ENCODE measurements at regions of chr9 and their contacts with region 1.

Region 1: DNA sequence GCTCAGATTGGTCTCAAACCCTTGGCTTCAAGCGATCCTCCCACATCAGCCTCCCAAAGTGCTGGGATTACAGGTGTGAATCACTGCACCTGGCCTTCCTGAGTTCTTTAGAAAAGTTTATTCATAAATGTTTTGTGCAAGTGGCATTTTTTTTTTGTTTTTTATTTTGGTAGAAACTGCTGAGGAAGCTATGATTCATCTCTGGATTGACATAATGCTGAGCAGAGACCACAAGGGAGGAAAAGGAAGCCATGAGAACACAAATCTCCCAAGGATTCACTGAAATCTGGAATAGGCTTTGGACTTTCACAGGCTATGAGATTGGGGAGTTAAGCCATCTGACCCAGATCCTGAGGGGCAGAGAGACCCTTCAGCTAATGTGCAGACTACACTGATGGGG is 3.4 kb upstream of the SLC46A2 start:
- DNase-seq: peak; percentile 54 to 83 (median 82)
- H3K4me3 ChIP-seq: peak overlapping the region; percentile 7 to 92 (median 12)
- H3K4me3 Mint-ChIP-seq: peak overlapping the region; percentile 7 to 87
- H3K27ac ChIP-seq: peak overlapping the region; percentile 96 to 97
- H3K27ac Mint-ChIP-seq: peak overlapping the region; percentile 97 to 100 (median 100)
- H3K4me1 ChIP-seq: peaks cover 93 to 100% of the 10 kb centered on the region in 2 donors
- H3K4me1 Mint-ChIP-seq: peaks cover 91% of the 10 kb centered on the region
- H3K27me3 ChIP-seq: no peaks in the 10 kb centered on the region
- H3K27me3 Mint-ChIP-seq: peaks cover 0 to 7% (median 6%) of the 10 kb centered on the region in 3 donors
- CTCF ChIP-seq: no peak

Region 2: DNA sequence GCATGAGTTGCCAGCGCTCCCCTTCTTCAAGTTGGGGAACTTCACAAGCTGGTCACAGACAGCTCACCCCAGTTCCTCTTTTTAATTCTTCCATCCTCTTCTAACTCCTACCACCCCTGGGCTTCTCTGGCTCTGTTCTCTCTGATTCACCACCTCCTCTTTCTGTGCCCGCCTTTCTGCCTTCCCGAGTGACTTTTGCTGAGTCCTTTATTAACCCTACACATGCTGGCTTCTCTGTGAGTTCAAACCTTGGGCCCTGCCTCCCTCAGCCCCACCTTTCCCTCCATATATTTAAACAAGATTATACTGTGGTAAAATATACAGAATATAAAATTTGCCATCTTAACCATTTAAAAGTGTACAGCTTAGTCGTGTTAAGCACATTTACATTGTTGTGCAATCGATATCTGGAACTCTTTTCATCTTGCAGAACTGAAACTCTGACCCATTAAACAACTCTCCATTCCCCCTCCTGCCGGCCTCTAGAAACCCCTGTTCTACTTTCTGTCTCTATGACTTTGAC is 35.4 kb before region 1 on chr9:
- intact Hi-C with region 1: loop called (anchors 1 to 5 kb)
- DNase-seq: peak; percentile 87 to 95 (median 93)
- H3K4me3 ChIP-seq: peak overlapping the region in 1 of 3 experiments; percentile 70
- H3K4me3 Mint-ChIP-seq: peak overlapping the region; percentile 4 to 43
- H3K27ac ChIP-seq: peak overlapping the region; percentile 82 to 97
- H3K27ac Mint-ChIP-seq: peak overlapping the region; percentile 94 to 100 (median 99)
- H3K4me1 ChIP-seq: peaks cover 91 to 93% of the 10 kb centered on the region in 2 donors
- H3K4me1 Mint-ChIP-seq: peaks cover 94% of the 10 kb centered on the region
- H3K27me3 ChIP-seq: no peaks in the 10 kb centered on the region
- H3K27me3 Mint-ChIP-seq: peaks cover 0 to 5% (median 0%) of the 10 kb centered on the region in 3 donors
- CTCF ChIP-seq: no peak

Region 3: GRCh38 chr9:112881366-112881765 is 12.7 kb before region 1 on chr9:
- intact Hi-C with region 1: no loop called
- DNase-seq: no peak
- H3K4me3 ChIP-seq: no peak overlapping the region
- H3K4me3 Mint-ChIP-seq: no peak overlapping the region
- H3K27ac ChIP-seq: no peak overlapping the region
- H3K27ac Mint-ChIP-seq: peak overlapping the region in 4 of 7 donors; percentile 37 to 52 (median 43)
- H3K4me1 ChIP-seq: peaks cover 0 to 7% of the 10 kb centered on the region in 2 donors
- H3K4me1 Mint-ChIP-seq: peaks cover 15% of the 10 kb centered on the region
- H3K27me3 ChIP-seq: no peaks in the 10 kb centered on the region
- H3K27me3 Mint-ChIP-seq: peaks cover 0 to 2% (median 0%) of the 10 kb centered on the region in 3 donors
- CTCF ChIP-seq: no peak

Region 4: GRCh38 chr9:112945620-112946208 is 51.7 kb after region 1 on chr9:
- intact Hi-C with region 1: no loop called
- DNase-seq: no peak
- H3K4me3 ChIP-seq: no peak overlapping the region
- H3K4me3 Mint-ChIP-seq: peak overlapping the region in 1 of 2 donors; percentile 26
- H3K27ac ChIP-seq: no peak overlapping the region
- H3K27ac Mint-ChIP-seq: no peak overlapping the region
- H3K4me1 ChIP-seq: no peaks in the 10 kb centered on the region
- H3K4me1 Mint-ChIP-seq: no peaks in the 10 kb centered on the region
- H3K27me3 ChIP-seq: peaks cover 0 to 8% of the 10 kb centered on the region in 2 donors
- H3K27me3 Mint-ChIP-seq: peaks cover 4 to 24% (median 12%) of the 10 kb centered on the region in 3 donors
- CTCF ChIP-seq: no peak

Measured in CD14-positive monocyte (primary cell).